CD8-positive, alpha-beta T cell (primary cell): ENCODE measurements at regions of chr19 and their contacts with region 1.

Region 1: GRCh38 chr19:28710278-28710677 is 502.7 kb downstream of the UQCRFS1 start:
- DNase-seq: peak in 2 of 9 experiments; percentile 65 to 73
- ATAC-seq: no peak
- H3K4me3 ChIP-seq: no peak overlapping the region
- H3K4me3 Mint-ChIP-seq: no peak overlapping the region
- H3K27ac ChIP-seq: no peak overlapping the region
- H3K27ac Mint-ChIP-seq: no peak overlapping the region
- H3K4me1 ChIP-seq: no peaks in the 10 kb centered on the region
- H3K4me1 Mint-ChIP-seq: no peaks in the 10 kb centered on the region
- H3K27me3 ChIP-seq: no peaks in the 10 kb centered on the region
- H3K27me3 Mint-ChIP-seq: no peaks in the 10 kb centered on the region
- CTCF ChIP-seq: peak; percentile 79

Region 2: GRCh38 chr19:27966390-27966816 is 743.9 kb before region 1 on chr19:
- CTCF ChIA-PET with region 1: no interaction called
- POLR2A ChIA-PET with region 1: no interaction called
- intact Hi-C with region 1: loop called in 1 of 2 experiments (anchors 2 kb)
- DNase-seq: peak in 2 of 9 experiments; percentile 4
- ATAC-seq: no peak
- H3K4me3 ChIP-seq: no peak overlapping the region
- H3K4me3 Mint-ChIP-seq: no peak overlapping the region
- H3K27ac ChIP-seq: no peak overlapping the region
- H3K27ac Mint-ChIP-seq: no peak overlapping the region
- H3K4me1 ChIP-seq: no peaks in the 10 kb centered on the region
- H3K4me1 Mint-ChIP-seq: no peaks in the 10 kb centered on the region
- H3K27me3 ChIP-seq: no peaks in the 10 kb centered on the region
- H3K27me3 Mint-ChIP-seq: peaks cover 2% of the 10 kb centered on the region
- CTCF ChIP-seq: peak; percentile 31

Region 3: GRCh38 chr19:28242297-28242927 is 467.9 kb before region 1 on chr19:
- CTCF ChIA-PET with region 1: no interaction called
- POLR2A ChIA-PET with region 1: no interaction called
- intact Hi-C with region 1: loop called (anchors 5 kb)
- DNase-seq: peak in 3 of 9 experiments; percentile 2 to 43 (median 29)
- ATAC-seq: no peak
- H3K4me3 ChIP-seq: no peak overlapping the region
- H3K4me3 Mint-ChIP-seq: no peak overlapping the region
- H3K27ac ChIP-seq: no peak overlapping the region
- H3K27ac Mint-ChIP-seq: no peak overlapping the region
- H3K4me1 ChIP-seq: no peaks in the 10 kb centered on the region
- H3K4me1 Mint-ChIP-seq: no peaks in the 10 kb centered on the region
- H3K27me3 ChIP-seq: no peaks in the 10 kb centered on the region
- H3K27me3 Mint-ChIP-seq: no peaks in the 10 kb centered on the region
- CTCF ChIP-seq: peak; percentile 45

Region 4: GRCh38 chr19:28466107-28467045 is 243.9 kb before region 1 on chr19:
- CTCF ChIA-PET with region 1: interaction called, 11 read pairs
- POLR2A ChIA-PET with region 1: no interaction called
- intact Hi-C with region 1: loop called in 1 of 2 experiments (anchors 1 kb)
- DNase-seq: peak; percentile 16 to 79 (median 70)
- ATAC-seq: peak; percentile 36
- H3K4me3 ChIP-seq: no peak overlapping the region
- H3K4me3 Mint-ChIP-seq: no peak overlapping the region
- H3K27ac ChIP-seq: no peak overlapping the region
- H3K27ac Mint-ChIP-seq: no peak overlapping the region
- H3K4me1 ChIP-seq: peaks cover 15% of the 10 kb centered on the region
- H3K4me1 Mint-ChIP-seq: peaks cover 38% of the 10 kb centered on the region
- H3K27me3 ChIP-seq: no peaks in the 10 kb centered on the region
- H3K27me3 Mint-ChIP-seq: peaks cover 2% of the 10 kb centered on the region
- CTCF ChIP-seq: peak; percentile 71

Region 5: GRCh38 chr19:28652765-28653164 is 57.5 kb before region 1 on chr19:
- CTCF ChIA-PET with region 1: no interaction called
- POLR2A ChIA-PET with region 1: no interaction called
- intact Hi-C with region 1: no loop called
- DNase-seq: peak in 1 of 9 experiments; percentile 3
- ATAC-seq: no peak
- H3K4me3 ChIP-seq: no peak overlapping the region
- H3K4me3 Mint-ChIP-seq: no peak overlapping the region
- H3K27ac ChIP-seq: no peak overlapping the region
- H3K27ac Mint-ChIP-seq: no peak overlapping the region
- H3K4me1 ChIP-seq: no peaks in the 10 kb centered on the region
- H3K4me1 Mint-ChIP-seq: peaks cover 6% of the 10 kb centered on the region
- H3K27me3 ChIP-seq: no peaks in the 10 kb centered on the region
- H3K27me3 Mint-ChIP-seq: peaks cover 2% of the 10 kb centered on the region
- CTCF ChIP-seq: no peak